AG04449 (cell line): ENCODE measurements at regions of chr9 and their contacts with region 1.

Region 1: GRCh38 chr9:97890038-97890437 is 32.3 kb downstream of the TRMO start:
- DNase-seq: no peak
- H3K4me3 ChIP-seq: no peak overlapping the region
- CTCF ChIP-seq: peak; percentile 32

Region 2: GRCh38 chr9:97906236-97906831 is 16.3 kb after region 1 on chr9:
- CTCF ChIA-PET with region 1: interaction called, 147 read pairs
- POLR2A ChIA-PET with region 1: interaction called, 3 read pairs
- DNase-seq: no peak
- H3K4me3 ChIP-seq: no peak overlapping the region
- CTCF ChIP-seq: no peak